ENCODE measurements at regions of chr19 and their contacts with region 1.

Region 1: DNA sequence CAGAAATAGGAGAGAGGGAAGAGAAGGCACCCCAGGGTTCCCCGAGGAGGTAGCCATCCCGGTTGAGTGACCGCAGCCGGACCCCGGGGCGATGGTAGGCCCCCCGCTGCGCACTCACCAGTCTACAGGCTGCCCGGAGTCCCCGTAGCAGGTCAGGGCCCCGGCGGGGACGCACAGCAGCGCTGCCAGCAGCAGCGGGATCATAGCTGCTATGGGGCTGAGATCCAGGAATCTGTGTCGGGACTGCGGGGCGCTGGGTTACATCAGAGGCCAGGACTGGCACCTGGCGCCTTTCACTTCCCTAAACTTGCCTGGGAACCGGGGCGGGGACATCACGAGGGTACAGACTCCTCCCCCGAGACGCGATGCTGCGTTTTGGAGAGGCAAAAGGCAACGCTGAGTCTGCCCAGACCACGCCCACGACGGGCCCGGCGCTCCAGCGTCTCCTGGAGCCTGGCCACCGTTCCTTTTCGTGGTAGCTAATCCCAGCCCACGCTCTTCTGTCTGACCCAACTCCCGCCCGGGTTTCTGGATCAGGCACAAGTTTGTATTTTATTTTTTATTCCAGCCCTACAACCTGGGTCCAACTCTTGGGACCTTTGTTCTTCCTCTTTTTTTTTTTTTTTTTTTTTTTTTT is at the start of gene DNASE2:
- DNase-seq: peak; percentile 98
- H3K4me3 ChIP-seq: peak within 1 kb of the TSS; percentile 45 to 65
- H3K27ac ChIP-seq: peak within 1 kb of the TSS; percentile 74 to 83
- H3K4me1 ChIP-seq: no peaks in the 10 kb centered on the region
- H3K27me3 ChIP-seq: no peaks in the 10 kb centered on the region
- CTCF ChIP-seq: peak in 1 of 4 experiments; percentile 12
- POLR2A ChIP-seq: peak; percentile 98
- total RNA-seq, gene DNASE2: 41.4 to 63.9 TPM

Region 2: GRCh38 chr19:12938234-12939025 is 57.1 kb after region 1 on chr19 and contains the start of gene CALR:
- intact Hi-C with region 1: loop called (anchors 10 kb)
- DNase-seq: peak; percentile 100
- H3K4me3 ChIP-seq: peak within 1 kb of the TSS; percentile 99
- H3K27ac ChIP-seq: peak within 1 kb of the TSS; percentile 88 to 90
- H3K4me1 ChIP-seq: peaks cover 24% of the 10 kb centered on the region
- H3K27me3 ChIP-seq: no peaks in the 10 kb centered on the region
- CTCF ChIP-seq: peak in 2 of 4 experiments; percentile 21 to 45
- POLR2A ChIP-seq: peak; percentile 100
- total RNA-seq, gene CALR: 532 to 980 TPM

Region 3: GRCh38 chr19:13162518-13163314 is 281.4 kb after region 1 on chr19:
- intact Hi-C with region 1: no loop called
- DNase-seq: peak; percentile 99
- H3K4me3 ChIP-seq: peak overlapping the region; percentile 12 to 35
- H3K27ac ChIP-seq: peak overlapping the region; percentile 93 to 94
- H3K4me1 ChIP-seq: peaks cover 8% of the 10 kb centered on the region
- H3K27me3 ChIP-seq: no peaks in the 10 kb centered on the region
- CTCF ChIP-seq: peak in 1 of 4 experiments; percentile 5
- POLR2A ChIP-seq: no peak

Measured in prostate gland (tissue), 2 donors.